ENCODE measurements at regions of chr4 and their contacts with region 1.

Region 1: DNA sequence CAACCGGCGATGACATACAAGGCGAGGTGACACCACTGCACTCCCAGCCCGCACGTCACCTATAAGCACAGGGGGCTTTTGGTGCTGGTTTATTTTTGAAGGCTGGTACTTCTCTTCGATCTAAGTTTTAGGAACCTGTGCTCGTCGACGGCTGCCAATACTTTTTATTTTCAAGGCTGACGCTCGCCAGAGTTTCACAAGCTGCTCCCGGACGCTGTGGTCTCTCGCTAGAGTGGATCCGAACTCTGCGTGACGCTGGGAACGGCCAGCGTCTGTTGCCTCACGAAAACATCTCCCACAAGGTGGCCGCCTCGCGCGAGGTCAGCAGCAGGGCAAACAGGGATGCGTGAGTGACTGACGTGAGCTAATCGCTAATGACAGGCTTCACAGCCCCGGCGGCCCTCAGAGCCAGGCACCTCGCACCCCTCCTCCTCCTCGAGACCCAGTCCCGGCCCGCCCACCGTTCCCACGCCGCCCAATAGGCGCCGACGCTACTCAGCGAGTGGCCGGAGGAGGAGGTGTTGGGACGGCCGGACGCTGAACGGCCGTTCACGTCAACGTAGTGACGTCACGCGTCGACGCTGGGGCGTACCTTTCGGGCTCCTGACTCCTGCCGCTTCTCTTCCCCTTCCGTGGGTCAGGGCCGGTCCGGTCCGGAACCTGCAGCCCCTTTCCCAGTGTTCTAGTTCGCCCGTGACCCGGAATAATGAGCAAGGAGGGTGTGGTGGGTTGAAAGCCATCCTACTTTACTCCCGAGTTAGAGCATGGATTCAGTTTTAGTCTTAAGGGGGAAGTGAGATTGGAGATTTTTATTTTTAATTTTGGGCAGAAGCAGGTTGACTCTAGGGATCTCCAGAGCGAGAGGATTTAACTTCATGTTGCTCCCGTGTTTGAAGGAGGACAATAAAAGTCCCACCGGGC is at the start of gene CLCN3:
- ATAC-seq: peak; percentile 88 to 97 (median 94)
- H3K4me3 ChIP-seq: peak within 1 kb of the TSS; percentile 56 to 90 (median 62)
- H3K27ac ChIP-seq: peak within 1 kb of the TSS; percentile 82 to 86
- H3K4me1 ChIP-seq: peaks cover 0 to 6% of the 10 kb centered on the region in 2 donors
- total RNA-seq, gene CLCN3: 54.2 to 128 (median 88.5) TPM

Region 2: DNA sequence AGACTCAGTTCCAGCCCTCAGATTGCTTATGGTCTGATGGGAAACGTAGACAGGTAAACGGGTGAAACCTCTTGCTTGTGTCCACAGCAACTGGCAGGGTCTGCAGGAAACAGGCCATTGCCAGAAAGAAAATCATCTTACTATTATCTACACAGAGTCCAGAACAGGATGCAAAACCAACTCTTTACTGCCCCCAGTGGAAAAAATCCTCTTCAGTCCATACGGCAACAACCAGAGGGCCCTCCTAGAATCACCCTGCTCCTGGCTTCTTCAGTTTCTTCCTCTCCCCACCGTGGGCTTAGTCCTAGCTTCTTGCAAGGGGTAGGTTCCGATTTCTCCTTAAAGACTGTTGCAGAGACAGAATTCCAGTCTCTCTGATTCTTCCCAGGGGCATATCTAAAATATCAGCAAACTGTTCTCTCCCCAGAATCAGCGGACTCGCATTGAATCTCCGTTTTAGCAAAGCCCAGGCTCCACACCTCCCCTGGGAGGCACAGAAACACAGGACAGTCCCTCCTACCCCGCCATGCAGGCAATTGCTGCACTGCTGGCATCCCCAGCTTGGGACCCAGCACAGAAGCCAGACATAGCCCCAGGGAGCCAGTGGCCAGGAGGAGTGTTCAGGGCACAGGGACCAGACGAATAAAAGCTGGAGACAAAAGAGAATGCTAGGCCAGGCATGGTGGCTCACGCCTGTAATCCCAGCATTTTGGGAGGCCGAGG is 308.4 kb before region 1 on chr4:
- in situ Hi-C with region 1: no loop called
- ATAC-seq: peak in 5 of 8 experiments; percentile 45 to 93 (median 84)
- H3K4me3 ChIP-seq: no peak overlapping the region
- H3K27ac ChIP-seq: no peak overlapping the region
- H3K4me1 ChIP-seq: peaks cover 13 to 23% of the 10 kb centered on the region in 2 donors

Region 3: DNA sequence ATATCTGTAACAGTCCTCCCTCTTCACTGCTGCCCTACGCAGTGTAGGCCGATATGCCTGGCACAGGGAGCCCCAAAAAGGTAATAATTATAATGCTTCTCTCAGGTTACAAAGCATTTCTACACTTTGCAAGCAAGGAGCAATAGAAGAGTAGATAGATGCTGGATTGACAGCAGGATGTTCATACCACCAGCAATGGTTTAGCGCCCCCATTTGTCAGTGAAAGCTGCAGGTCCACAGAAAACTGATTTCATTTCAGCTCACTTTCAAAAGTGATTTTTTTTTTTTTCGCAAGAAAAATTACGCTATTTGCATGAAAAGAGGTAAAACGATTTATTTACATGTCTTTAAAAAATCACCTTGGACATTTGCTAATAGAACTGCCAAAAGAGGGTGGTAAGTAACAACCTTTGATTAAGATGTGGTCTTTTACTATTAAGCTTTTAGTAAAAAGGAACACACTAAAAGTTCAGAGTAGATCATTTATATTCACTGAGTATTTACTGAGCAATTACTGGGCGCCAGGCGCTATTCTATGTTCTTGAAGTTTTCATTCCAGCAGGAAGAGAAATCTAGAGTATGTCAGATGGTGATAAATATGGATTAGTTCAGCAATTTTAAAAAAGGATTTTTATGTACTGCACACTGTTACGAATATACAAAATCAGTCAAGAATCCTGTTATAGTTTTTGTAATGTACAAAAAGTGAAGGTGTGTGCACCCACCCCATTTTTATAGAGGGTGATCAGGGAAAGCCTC is 103.2 kb after region 1 on chr4:
- in situ Hi-C with region 1: loop called in 2 of 9 experiments (anchors 25 kb)
- ATAC-seq: no peak
- H3K4me3 ChIP-seq: no peak overlapping the region
- H3K27ac ChIP-seq: no peak overlapping the region
- H3K4me1 ChIP-seq: no peaks in the 10 kb centered on the region

Region 4: DNA sequence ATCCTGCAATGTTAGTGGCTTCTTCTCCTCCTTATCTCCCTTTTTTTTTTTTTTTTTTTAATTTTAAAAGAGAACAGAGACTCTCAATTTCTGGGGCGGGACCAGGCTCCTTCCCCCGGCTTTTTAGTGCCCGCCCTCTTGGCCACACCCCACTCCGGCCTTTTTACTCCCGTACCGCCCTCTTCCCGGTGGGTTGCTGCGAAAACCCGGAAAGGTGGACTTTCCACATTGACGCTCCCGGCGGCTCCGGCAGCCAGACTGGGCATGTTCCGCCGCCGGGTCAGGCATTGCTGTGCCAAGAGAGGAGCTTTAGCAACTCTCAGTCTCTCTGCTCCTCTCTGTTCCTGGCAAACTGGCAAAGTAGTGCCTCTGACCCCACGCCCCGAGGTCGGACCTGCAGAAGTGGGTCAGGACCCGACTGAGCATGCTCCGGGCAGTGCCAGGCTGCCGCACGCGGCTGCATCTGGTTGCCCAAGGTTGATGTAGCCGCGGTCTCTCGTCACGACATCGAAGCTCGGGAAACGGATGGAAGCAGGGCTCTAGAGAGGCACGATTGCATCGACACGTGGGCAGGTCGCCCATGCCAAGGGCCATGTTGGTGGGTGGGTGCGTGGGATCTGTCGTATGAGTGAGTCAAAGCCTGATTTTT is 407.1 kb after region 1 on chr4:
- in situ Hi-C with region 1: loop called in 1 of 9 experiments (anchors 25 kb)
- ATAC-seq: peak; percentile 42 to 64 (median 48)
- H3K4me3 ChIP-seq: peak overlapping the region; percentile 58 to 80 (median 61)
- H3K27ac ChIP-seq: no peak overlapping the region
- H3K4me1 ChIP-seq: peaks cover 0 to 3% of the 10 kb centered on the region in 2 donors

Region 5: GRCh38 chr4:170047771-170048354 is 427.6 kb after region 1 on chr4:
- in situ Hi-C with region 1: loop called in 2 of 9 experiments (anchors 25 kb)
- ATAC-seq: no peak
- H3K4me3 ChIP-seq: no peak overlapping the region
- H3K27ac ChIP-seq: no peak overlapping the region
- H3K4me1 ChIP-seq: no peaks in the 10 kb centered on the region